Naive thymus-derived CD8-positive, alpha-beta T cell (primary cell): ENCODE measurements at regions of chr9 and their contacts with region 1.

Region 1: DNA sequence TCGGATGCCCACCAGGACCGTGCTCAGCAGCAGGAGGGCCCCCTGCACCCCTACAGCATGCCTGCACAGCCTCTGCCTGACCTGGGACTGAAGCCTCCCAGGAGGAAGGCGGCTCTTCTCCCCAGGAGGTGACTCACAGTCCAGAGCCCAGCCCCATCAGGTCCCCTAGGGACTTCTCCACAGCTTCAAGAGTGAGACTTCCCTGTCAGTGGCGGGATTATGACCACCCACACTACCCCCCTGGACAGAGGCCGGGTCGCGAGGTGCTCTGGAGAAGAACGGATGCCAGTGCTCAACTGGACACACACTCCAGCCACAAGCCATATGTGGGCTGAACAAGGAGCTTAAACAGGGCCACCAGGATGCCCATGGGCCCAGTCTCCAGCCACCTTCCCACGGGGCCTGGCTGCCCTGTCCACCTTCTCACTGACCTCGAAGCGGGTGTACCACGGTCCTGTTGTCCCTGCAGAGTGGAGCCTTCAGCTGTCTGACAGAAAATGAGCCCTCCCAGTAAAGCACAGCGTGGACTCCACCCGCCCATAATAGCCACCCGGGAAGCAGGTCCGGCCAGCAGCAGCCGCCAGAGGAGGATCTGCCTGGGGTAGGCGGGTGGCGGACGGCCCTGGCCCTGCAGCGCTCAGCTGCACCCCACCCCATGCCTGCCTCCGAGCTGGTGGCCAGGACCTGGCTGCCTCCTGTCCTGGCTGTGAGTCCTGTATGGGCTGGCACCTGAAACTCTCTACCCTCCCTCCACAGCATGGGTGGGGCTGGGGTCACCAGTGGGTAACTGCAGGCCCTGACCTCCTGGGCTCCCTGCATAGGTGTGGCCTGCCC is 54.7 kb downstream of the SEMA4D start:
- DNase-seq: no peak
- ATAC-seq: no peak
- H3K4me3 Mint-ChIP-seq: peak overlapping the region in 3 of 10 donors; percentile 51 to 71 (median 55)
- H3K27ac Mint-ChIP-seq: peak overlapping the region; percentile 94 to 99 (median 98)
- H3K4me1 Mint-ChIP-seq: peaks cover 45 to 95% (median 89%) of the 10 kb centered on the region in 4 donors
- H3K27me3 Mint-ChIP-seq: no peaks in the 10 kb centered on the region

Region 2: DNA sequence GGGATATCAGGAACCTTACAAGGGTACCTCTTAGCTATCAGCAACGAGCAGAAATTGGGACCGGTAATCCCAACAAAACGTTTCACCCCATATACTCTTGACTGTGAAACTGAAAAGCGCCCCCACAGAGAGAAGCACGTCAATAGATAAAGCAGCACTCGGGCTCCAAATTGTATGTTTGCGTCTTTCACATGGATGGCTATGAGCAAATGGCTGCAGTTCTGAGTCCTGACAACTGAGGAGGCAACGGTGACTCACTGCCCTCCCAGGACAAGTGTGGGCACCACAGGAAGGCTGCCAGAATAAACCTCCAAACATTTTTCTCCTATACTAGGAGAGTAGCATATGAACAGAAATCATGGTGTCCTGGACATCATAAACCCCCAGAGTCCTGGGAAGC is 18.1 kb after region 1 on chr9:
- POLR2A ChIA-PET with region 1: interaction called, 108 read pairs
- DNase-seq: no peak
- ATAC-seq: peak in 1 of 2 donors; percentile 5
- H3K4me3 Mint-ChIP-seq: peak overlapping the region in 9 of 10 donors; percentile 44 to 90 (median 65)
- H3K27ac Mint-ChIP-seq: peak overlapping the region; percentile 95 to 99 (median 97)
- H3K4me1 Mint-ChIP-seq: peaks cover 72 to 99% (median 97%) of the 10 kb centered on the region in 4 donors
- H3K27me3 Mint-ChIP-seq: no peaks in the 10 kb centered on the region

Region 3: GRCh38 chr9:89623925-89624420 is 180.8 kb after region 1 on chr9:
- POLR2A ChIA-PET with region 1: no interaction called
- DNase-seq: peak in 1 of 10 donors; percentile 14
- ATAC-seq: no peak
- H3K4me3 Mint-ChIP-seq: no peak overlapping the region
- H3K27ac Mint-ChIP-seq: no peak overlapping the region
- H3K4me1 Mint-ChIP-seq: no peaks in the 10 kb centered on the region
- H3K27me3 Mint-ChIP-seq: no peaks in the 10 kb centered on the region

Region 4: DNA sequence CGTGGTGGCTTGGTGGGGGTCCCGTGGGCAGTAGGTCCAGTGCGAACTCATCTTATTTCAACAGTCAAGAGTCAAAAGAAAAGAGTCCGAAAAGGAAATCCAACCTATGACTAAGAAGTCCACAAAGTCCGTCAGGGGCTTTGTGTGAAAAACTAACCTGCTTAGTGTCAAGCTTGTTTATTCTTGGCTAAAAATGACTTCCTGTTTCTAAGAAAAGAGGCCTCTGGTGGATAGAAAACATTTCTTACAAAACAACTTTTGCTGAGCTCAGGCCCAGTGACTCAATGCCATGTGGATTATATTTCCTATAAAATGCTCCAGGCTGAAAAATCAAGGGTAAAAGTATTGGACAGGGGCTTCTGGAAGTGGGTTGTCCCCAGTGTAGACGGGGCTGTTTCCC is 267.5 kb after region 1 on chr9:
- POLR2A ChIA-PET with region 1: no interaction called
- DNase-seq: no peak
- ATAC-seq: no peak
- H3K4me3 Mint-ChIP-seq: no peak overlapping the region
- H3K27ac Mint-ChIP-seq: no peak overlapping the region
- H3K4me1 Mint-ChIP-seq: peaks cover 10 to 29% (median 17%) of the 10 kb centered on the region in 4 donors
- H3K27me3 Mint-ChIP-seq: peaks cover 0 to 6% (median 0%) of the 10 kb centered on the region in 5 donors